Caco-2 (cell line): ENCODE measurements at regions of chr7 and their contacts with region 1.

Region 1: GRCh38 chr7:139482662-139483469 is 607 bp downstream of the KLRG2 start:
- DNase-seq: peak in 1 of 2 experiments; percentile 53
- H3K4me3 ChIP-seq: peak overlapping the region; percentile 56
- H3K4me3 Mint-ChIP-seq: peak overlapping the region; percentile 68
- H3K27ac Mint-ChIP-seq: no peak overlapping the region
- H3K4me1 ChIP-seq: peaks cover 4% of the 10 kb centered on the region; the same call in 1 of the 2 replicates
- H3K4me1 Mint-ChIP-seq: no peaks in the 10 kb centered on the region
- H3K27me3 ChIP-seq: no peaks in the 10 kb centered on the region; the same call in 1 of the 2 replicates
- H3K27me3 Mint-ChIP-seq: peaks cover 3% of the 10 kb centered on the region
- CTCF ChIP-seq: no peak

Region 2: GRCh38 chr7:139382439-139382838 is 100.4 kb before region 1 on chr7:
- CTCF ChIA-PET with region 1: no interaction called
- POLR2A ChIA-PET with region 1: no interaction called
- intact Hi-C with region 1: no loop called
- DNase-seq: no peak
- H3K4me3 ChIP-seq: no peak overlapping the region
- H3K4me3 Mint-ChIP-seq: no peak overlapping the region
- H3K27ac Mint-ChIP-seq: no peak overlapping the region
- H3K4me1 ChIP-seq: no peaks in the 10 kb centered on the region
- H3K4me1 Mint-ChIP-seq: no peaks in the 10 kb centered on the region
- H3K27me3 ChIP-seq: no peaks in the 10 kb centered on the region
- H3K27me3 Mint-ChIP-seq: no peaks in the 10 kb centered on the region
- CTCF ChIP-seq: no peak

Region 3: DNA sequence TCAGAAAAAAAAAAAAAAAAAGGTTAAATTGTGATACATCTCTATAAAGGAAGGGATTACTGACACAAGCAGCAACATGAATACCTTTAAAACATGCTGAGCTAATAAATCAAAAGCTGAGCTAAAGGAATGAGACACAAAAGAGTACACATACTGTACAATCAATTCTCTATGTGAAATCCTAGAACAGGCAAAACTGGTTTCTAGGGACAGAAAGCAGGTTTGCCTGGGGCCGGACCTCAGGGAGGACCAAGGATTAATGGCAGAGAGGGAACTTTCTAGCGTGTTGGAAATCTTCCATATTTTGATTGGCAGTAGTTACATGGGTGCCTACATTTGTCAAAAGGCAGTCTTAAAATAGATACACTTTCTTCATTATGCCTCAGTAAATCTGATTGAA is 51.9 kb before region 1 on chr7:
- CTCF ChIA-PET with region 1: interaction called, 11 read pairs
- POLR2A ChIA-PET with region 1: no interaction called
- intact Hi-C with region 1: loop called (anchors 5 kb)
- DNase-seq: peak; percentile 65 to 79
- H3K4me3 ChIP-seq: no peak overlapping the region
- H3K4me3 Mint-ChIP-seq: no peak overlapping the region
- H3K27ac Mint-ChIP-seq: peak overlapping the region; percentile 31
- H3K4me1 ChIP-seq: peaks cover 23% of the 10 kb centered on the region
- H3K4me1 Mint-ChIP-seq: peaks cover 24% of the 10 kb centered on the region
- H3K27me3 ChIP-seq: no peaks in the 10 kb centered on the region
- H3K27me3 Mint-ChIP-seq: no peaks in the 10 kb centered on the region
- CTCF ChIP-seq: no peak

Region 4: DNA sequence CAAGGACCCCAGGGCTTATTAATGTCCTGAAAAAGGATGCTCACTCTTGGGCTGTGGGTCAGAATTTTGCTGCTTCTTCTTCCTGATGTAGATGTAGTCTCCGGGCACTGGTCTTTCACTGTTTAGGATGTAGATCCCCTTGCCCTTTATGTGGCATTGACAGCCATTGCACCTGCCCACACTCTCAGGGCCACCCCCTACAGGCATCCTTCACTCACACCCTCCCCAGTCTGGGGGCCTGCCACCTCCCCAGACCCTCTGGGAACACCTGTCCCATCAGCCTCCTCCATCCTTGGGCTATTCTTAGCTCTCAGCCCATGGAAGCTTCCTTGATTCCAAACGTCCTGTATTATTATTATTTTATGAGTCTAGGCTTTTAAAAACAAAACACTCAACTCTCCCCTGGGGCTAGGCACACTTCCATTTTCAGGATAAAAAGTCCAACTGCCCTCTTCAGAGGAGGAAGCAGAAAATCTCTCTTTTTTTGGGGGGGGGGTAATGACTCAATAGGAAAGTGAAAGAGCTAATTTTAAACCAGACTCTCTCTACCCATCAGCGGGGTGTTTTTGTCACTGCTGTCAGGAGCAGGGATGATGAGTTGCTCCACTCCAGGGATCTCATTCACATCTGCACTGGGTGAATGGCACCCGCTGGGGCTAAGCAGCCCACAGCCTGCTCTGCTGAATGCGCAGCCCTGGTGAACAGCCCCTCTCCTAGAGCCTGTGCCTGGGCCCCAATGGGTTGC is 12.1 kb after region 1 on chr7:
- CTCF ChIA-PET with region 1: interaction called, 10 read pairs
- POLR2A ChIA-PET with region 1: interaction called, 4 read pairs
- intact Hi-C with region 1: no loop called
- DNase-seq: no peak
- H3K4me3 ChIP-seq: no peak overlapping the region
- H3K4me3 Mint-ChIP-seq: no peak overlapping the region
- H3K27ac Mint-ChIP-seq: no peak overlapping the region
- H3K4me1 ChIP-seq: no peaks in the 10 kb centered on the region
- H3K4me1 Mint-ChIP-seq: no peaks in the 10 kb centered on the region
- H3K27me3 ChIP-seq: no peaks in the 10 kb centered on the region
- H3K27me3 Mint-ChIP-seq: no peaks in the 10 kb centered on the region
- CTCF ChIP-seq: no peak